Ascending aorta (tissue), 2 donors: ENCODE measurements at regions of chr2 and their contacts with region 1.

Region 1: DNA sequence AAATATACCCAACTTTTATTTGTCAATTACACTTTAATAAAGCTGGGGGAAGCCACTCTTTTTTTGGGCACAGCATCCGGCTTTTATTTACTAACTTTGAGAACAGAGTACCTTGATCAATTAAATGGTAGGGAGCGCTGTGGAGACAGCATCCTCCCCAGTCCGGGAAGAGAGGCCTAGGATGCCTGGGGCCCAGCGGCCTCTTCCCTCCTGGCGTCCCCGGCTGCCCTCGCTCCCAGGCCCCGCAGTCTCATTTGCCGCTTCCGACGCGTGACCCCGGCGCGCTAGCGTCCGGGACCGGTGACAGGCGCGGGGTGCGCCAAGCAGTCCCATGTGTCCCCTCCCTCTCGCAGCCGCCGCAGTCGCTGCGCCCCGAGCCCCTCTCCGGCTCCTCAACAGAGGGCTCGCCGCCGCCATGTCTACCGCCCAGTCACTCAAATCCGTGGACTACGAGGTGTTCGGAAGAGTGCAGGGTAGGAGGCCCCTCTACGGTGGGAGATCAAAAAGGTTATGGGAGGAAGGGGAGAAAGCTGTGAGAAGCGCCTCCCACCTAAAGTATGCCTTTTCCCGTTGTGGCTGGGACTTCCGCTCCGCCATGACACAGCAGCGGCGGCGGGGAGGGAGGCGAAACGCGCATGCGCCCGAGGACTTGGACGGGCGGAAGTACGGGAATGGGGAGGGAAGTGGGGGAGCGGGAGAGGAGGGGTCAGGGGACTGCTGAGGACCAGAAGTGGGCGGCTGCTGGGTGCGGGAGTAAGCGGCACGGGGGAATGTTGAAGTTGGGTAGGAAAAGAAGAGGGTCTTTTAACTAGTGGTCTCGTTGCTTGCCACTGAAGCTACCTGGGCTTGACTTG is at the start of gene ACYP2:
- DNase-seq: peak; percentile 70 to 97
- H3K4me3 ChIP-seq: peak within 1 kb of the TSS; percentile 62 to 83
- H3K27ac ChIP-seq: peak within 1 kb of the TSS; percentile 98 to 99
- H3K4me1 ChIP-seq: no peaks in the 10 kb centered on the region
- H3K27me3 ChIP-seq: no peaks in the 10 kb centered on the region
- CTCF ChIP-seq: peak in 1 of 3 experiments; percentile 5
- total RNA-seq, gene ACYP2: 0.96 TPM

Region 2: GRCh38 chr2:53970724-53971602 is 144.5 kb before region 1 on chr2 and contains the start of gene PSME4:
- intact Hi-C with region 1: loop called (anchors 5 kb)
- DNase-seq: peak; percentile 77 to 97
- H3K4me3 ChIP-seq: peak within 1 kb of the TSS; percentile 90 to 92
- H3K27ac ChIP-seq: peak within 1 kb of the TSS; percentile 96 to 97
- H3K4me1 ChIP-seq: peaks cover 3 to 15% of the 10 kb centered on the region in 2 donors
- H3K27me3 ChIP-seq: no peaks in the 10 kb centered on the region
- CTCF ChIP-seq: no peak
- total RNA-seq, gene PSME4: 14.9 TPM

Region 3: GRCh38 chr2:54330162-54330925 is 214.8 kb after region 1 on chr2:
- intact Hi-C with region 1: loop called (anchors 5 kb)
- DNase-seq: peak; percentile 87 to 98
- H3K4me3 ChIP-seq: peak overlapping the region; percentile 67 to 69
- H3K27ac ChIP-seq: peak overlapping the region; percentile 88 to 96
- H3K4me1 ChIP-seq: peaks cover 2% of the 10 kb centered on the region in 2 donors
- H3K27me3 ChIP-seq: no peaks in the 10 kb centered on the region
- CTCF ChIP-seq: no peak

Region 4: DNA sequence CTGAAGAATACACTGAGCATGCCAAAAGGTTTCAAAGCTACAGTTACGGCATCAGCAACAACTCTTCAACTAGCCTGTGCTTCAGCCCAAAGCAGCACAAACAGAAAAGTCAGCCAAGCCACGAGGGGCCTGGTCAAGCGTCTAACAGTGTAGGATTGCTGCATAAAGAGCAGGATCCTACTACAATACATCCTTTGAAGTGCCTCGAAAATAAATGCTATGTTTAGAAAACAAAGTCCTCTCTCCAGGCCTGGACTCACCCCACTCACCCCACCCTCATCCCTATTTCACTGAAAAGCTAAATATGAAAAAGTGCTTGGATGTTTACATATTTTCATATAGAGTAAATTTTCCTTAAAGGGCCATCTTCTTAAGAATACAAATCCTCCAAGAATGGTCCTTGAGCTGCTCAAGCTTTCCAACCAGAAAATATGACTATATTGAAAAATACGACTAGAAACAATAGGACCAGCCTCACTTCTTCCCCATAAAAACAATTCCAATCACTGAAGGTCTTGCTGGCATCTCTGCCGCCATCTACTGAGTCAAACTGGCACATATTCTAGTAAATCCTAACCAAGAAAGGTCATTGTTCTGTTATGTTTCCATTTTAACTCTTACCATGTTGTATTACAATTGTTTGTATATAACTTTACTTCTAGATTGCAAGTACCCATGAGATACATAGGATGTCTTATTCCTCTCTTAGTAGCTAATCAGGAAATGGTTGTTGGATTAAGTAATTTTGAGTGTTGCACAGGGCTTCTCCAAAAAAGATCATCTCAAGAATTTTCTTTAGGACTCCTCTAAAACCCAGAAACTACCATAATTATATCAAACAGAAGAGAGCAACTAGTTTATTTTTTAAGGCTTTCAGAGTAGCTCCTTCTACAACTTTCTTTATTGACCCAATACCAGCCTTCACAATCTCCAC is 1053.0 kb after region 1 on chr2:
- intact Hi-C with region 1: loop called (anchors 10 kb)
- DNase-seq: peak in 1 of 2 donors; percentile 83
- H3K4me3 ChIP-seq: no peak overlapping the region
- H3K27ac ChIP-seq: peak overlapping the region; percentile 73
- H3K4me1 ChIP-seq: peaks cover 0 to 36% of the 10 kb centered on the region in 2 donors
- H3K27me3 ChIP-seq: no peaks in the 10 kb centered on the region
- CTCF ChIP-seq: peak; percentile 63 to 73 (median 71)

Region 5: DNA sequence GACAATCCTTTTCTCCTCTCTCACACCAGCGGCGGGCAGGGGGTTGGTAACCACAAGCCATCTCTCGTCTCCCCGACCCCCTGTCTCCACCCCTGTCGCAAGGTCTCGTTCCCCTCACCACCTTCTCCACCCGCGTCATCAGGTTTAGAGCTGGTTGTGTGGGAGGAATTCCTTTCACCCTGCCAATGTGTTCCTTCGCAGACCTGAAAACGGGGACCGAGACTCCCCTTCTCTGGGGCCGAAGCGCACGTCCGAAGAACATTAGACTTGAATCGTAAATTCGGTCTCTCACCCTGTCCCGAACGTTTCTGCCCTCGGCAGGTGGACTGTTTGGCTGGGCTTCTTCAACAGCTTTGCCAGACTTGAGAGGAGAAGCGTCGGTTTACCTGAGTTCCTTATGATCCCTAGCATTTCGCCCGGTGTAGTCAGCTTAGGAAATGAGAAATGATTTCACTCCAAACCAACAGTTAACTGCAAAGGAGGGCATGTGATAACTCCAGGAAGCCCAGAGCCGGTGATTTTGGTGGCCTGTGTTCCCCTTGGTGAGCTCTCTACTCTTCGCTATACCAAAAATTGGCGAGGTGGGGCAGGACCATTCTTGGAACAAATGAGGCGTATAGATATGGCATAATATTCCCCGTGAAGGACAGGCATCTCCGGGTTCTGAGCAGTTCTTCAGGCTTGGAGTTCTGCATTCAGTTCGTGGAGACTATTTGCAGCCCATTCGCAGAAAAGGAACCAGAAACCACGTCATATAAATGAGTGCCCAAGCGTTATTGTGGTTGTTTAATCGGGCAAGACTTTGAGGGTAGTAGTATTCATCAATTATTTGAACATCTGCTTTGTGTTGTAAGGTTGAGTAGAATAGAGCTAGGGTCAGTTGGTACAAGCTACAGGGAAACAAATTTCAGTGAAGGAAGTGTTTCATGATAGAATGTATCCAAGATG is 1404.7 kb after region 1 on chr2:
- intact Hi-C with region 1: loop called (anchors 10 kb)
- DNase-seq: peak in 1 of 2 donors; percentile 68
- H3K4me3 ChIP-seq: peak overlapping the region; percentile 60 to 93
- H3K27ac ChIP-seq: peak overlapping the region; percentile 83 to 84
- H3K4me1 ChIP-seq: peaks cover 3% of the 10 kb centered on the region in 2 donors
- H3K27me3 ChIP-seq: no peaks in the 10 kb centered on the region
- CTCF ChIP-seq: no peak